B cell (primary cell): ENCODE measurements at regions of chr9 and their contacts with region 1.

Region 1: DNA sequence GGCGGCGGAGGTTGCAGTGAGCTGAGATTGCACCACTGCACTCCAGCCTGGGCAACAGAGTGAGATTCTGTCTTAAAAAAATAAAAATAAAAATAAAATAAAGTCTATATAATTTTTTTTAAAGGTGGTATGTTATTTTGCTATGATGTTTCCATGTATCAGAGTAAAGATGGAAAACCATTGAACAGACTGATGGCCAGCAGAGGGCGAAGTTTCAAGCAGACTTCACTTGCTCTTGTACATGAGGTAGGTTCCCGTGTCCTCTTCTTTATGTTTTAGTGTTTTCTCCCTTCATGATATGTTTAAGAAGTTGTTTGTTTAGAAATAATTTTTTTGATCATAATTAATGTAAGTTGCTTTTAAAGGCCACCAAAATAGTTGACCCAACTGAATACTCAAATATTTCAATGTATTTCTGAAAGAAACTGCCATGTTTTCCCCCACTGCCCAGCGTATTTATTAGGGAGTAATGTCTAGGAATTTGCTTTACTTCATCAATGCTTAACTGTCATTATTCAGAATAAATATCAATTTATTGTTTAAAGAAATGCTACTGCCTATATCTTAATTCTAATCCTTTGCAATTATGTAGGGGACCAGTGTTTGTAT is 146.4 kb downstream of the HACD4 start:
- DNase-seq: peak; percentile 45
- ATAC-seq: no peak
- H3K4me3 ChIP-seq: no peak overlapping the region
- H3K4me3 Mint-ChIP-seq: no peak overlapping the region
- H3K27ac ChIP-seq: no peak overlapping the region
- H3K27ac Mint-ChIP-seq: no peak overlapping the region
- H3K4me1 ChIP-seq: no peaks in the 10 kb centered on the region
- H3K4me1 Mint-ChIP-seq: no peaks in the 10 kb centered on the region
- H3K27me3 ChIP-seq: no peaks in the 10 kb centered on the region
- H3K27me3 Mint-ChIP-seq: no peaks in the 10 kb centered on the region
- CTCF ChIP-seq: peak; percentile 75

Region 2: DNA sequence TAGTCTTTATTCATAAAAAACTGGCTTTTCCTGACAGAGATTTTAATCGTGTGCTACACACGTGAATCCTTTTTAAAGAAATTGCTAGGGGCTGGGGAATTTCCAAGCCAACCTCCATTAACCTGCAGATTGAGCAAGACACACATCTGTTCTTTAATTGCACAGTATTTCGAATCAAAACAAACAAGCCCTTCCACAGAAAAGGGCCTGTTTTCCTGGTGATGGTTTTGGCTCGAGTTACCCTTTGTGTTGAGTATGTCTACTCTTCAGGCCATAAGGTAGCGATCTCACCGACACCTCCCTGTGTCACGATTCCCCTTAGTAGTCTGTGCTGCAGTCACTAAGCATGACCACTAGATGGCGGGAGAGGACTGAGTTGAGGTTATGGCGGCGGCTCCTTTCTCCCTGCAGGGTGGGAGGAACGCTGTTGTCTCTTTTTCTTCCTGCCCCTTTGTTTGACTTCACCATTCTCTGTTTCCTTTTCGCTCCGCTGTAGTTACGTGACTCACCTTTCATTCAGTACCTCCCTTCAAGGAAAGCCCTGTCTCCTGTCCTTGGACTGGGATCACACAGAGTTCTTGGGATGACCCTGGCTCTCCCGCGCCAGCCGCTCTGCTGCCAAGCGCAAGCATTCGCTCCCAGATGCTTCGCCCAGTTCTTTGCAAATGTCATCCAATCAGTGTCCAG is 959.1 kb before region 1 on chr9:
- CTCF ChIA-PET with region 1: interaction called, 3 read pairs
- POLR2A ChIA-PET with region 1: no interaction called
- intact Hi-C with region 1: loop called (anchors 10 kb)
- DNase-seq: peak; percentile 81
- ATAC-seq: peak; percentile 97
- H3K4me3 ChIP-seq: peak overlapping the region in 3 of 5 experiments; percentile 2 to 21 (median 4)
- H3K4me3 Mint-ChIP-seq: peak overlapping the region; percentile 20
- H3K27ac ChIP-seq: no peak overlapping the region
- H3K27ac Mint-ChIP-seq: no peak overlapping the region
- H3K4me1 ChIP-seq: peaks cover 8 to 10% of the 10 kb centered on the region in 2 donors
- H3K4me1 Mint-ChIP-seq: peaks cover 9% of the 10 kb centered on the region
- H3K27me3 ChIP-seq: peaks cover 0 to 9% (median 7%) of the 10 kb centered on the region in 4 experiments
- H3K27me3 Mint-ChIP-seq: peaks cover 20% of the 10 kb centered on the region
- CTCF ChIP-seq: peak; percentile 96